CD8-positive, alpha-beta T cell (primary cell): ENCODE measurements at regions of chr11 and their contacts with region 1.

Region 1: GRCh38 chr11:123069908-123070821 is 8.2 kb upstream of the HSPA8 start:
- DNase-seq: peak in 2 of 9 experiments; percentile 46 to 65
- ATAC-seq: peak; percentile 71
- H3K4me3 ChIP-seq: peak overlapping the region; percentile 40 to 50
- H3K4me3 Mint-ChIP-seq: peak overlapping the region; percentile 84
- H3K27ac ChIP-seq: peak overlapping the region; percentile 80 to 85
- H3K27ac Mint-ChIP-seq: peak overlapping the region; percentile 92
- H3K4me1 ChIP-seq: peaks cover 52% of the 10 kb centered on the region
- H3K4me1 Mint-ChIP-seq: peaks cover 66% of the 10 kb centered on the region
- H3K27me3 ChIP-seq: no peaks in the 10 kb centered on the region
- H3K27me3 Mint-ChIP-seq: no peaks in the 10 kb centered on the region
- CTCF ChIP-seq: no peak

Region 2: DNA sequence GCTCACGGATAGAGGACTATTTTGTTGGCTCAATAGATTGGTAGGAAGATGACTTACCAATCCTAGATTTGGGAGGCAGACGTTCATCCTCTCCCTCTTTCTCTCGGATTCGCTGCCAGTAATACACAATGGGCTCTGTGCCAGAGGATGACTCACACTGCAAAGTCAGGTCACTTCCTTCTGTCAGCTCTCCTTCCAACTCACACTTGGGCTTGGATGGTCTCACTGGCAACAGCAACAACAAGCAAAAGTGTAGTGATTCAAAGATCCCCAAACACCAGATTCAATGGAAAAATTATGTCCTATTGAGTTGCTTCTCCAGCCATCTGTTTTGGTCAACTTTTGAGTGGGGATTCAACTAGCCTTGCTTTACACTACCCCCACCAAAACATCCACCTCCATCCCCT is 13.5 kb after region 1 on chr11:
- CTCF ChIA-PET with region 1: interaction called, 6 read pairs
- POLR2A ChIA-PET with region 1: interaction called, 8 read pairs
- intact Hi-C with region 1: loop called (anchors 1 to 2 kb)
- DNase-seq: peak in 8 of 9 experiments; percentile 45 to 82 (median 69)
- ATAC-seq: no peak
- H3K4me3 ChIP-seq: no peak overlapping the region
- H3K4me3 Mint-ChIP-seq: peak overlapping the region; percentile 20
- H3K27ac ChIP-seq: peak overlapping the region in 1 of 2 experiments; percentile 42
- H3K27ac Mint-ChIP-seq: peak overlapping the region; percentile 45
- H3K4me1 ChIP-seq: peaks cover 33% of the 10 kb centered on the region
- H3K4me1 Mint-ChIP-seq: peaks cover 44% of the 10 kb centered on the region
- H3K27me3 ChIP-seq: no peaks in the 10 kb centered on the region
- H3K27me3 Mint-ChIP-seq: no peaks in the 10 kb centered on the region
- CTCF ChIP-seq: no peak

Region 3: GRCh38 chr11:123103326-123103980 is 33.3 kb after region 1 on chr11:
- CTCF ChIA-PET with region 1: interaction called, 7 read pairs
- POLR2A ChIA-PET with region 1: interaction called, 11 read pairs
- intact Hi-C with region 1: loop called in 1 of 2 experiments (anchors 1 kb)
- DNase-seq: peak in 7 of 9 experiments; percentile 16 to 68 (median 38)
- ATAC-seq: peak; percentile 66
- H3K4me3 ChIP-seq: no peak overlapping the region
- H3K4me3 Mint-ChIP-seq: no peak overlapping the region
- H3K27ac ChIP-seq: no peak overlapping the region
- H3K27ac Mint-ChIP-seq: no peak overlapping the region
- H3K4me1 ChIP-seq: peaks cover 14% of the 10 kb centered on the region
- H3K4me1 Mint-ChIP-seq: peaks cover 27% of the 10 kb centered on the region
- H3K27me3 ChIP-seq: no peaks in the 10 kb centered on the region
- H3K27me3 Mint-ChIP-seq: no peaks in the 10 kb centered on the region
- CTCF ChIP-seq: peak; percentile 58